ENCODE measurements at regions of chr9 and their contacts with region 1.

Region 1: DNA sequence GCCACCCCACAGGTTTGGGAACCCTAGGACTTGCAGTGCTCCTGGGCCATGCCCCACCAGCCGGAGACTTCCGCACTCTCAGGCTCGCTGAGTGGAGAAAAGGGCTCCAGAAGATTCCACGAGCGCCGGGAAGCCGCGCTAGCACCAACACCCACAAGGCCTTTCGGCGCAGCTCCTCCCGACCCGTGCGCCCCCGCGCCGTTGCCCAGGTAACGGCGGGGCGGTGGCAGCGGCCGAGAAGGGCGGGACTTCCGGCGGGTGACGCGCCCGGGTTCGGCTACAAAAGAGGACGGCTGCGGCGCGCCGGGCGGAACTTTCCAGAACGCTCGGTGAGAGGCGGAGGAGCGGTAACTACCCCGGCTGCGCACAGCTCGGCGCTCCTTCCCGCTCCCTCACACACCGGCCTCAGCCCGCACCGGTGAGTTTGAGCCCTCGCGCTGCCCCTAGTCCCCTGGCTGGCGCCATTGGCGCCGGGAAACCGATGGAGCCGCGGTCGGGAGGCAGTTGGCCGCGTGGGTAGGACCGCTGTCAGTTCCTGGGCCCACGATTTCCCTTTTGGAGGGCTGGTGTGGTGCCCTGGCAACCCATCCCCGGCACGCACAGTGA is at the start of gene DNAJA1:
- DNase-seq: peak; percentile 98
- ATAC-seq: peak; percentile 84
- H3K4me3 Mint-ChIP-seq: peak within 1 kb of the TSS; percentile 95
- H3K27ac Mint-ChIP-seq: peak within 1 kb of the TSS; percentile 88
- H3K4me1 Mint-ChIP-seq: peaks cover 63% of the 10 kb centered on the region
- H3K27me3 Mint-ChIP-seq: no peaks in the 10 kb centered on the region
- CTCF ChIP-seq: no peak
- total RNA-seq, gene DNAJA1: 107 and 117 TPM in 2 replicates

Region 2: GRCh38 chr9:32550562-32551433 is 474.3 kb before region 1 on chr9:
- CTCF ChIA-PET with region 1: no interaction called
- POLR2A ChIA-PET with region 1: interaction called, 19 read pairs
- intact Hi-C with region 1: loop called (anchors 1 kb)
- DNase-seq: peak; percentile 91
- ATAC-seq: peak; percentile 80
- H3K4me3 Mint-ChIP-seq: peak overlapping the region; percentile 95
- H3K27ac Mint-ChIP-seq: peak overlapping the region; percentile 98
- H3K4me1 Mint-ChIP-seq: peaks cover 34% of the 10 kb centered on the region
- H3K27me3 Mint-ChIP-seq: no peaks in the 10 kb centered on the region
- CTCF ChIP-seq: no peak

Region 3: GRCh38 chr9:33044127-33044673 is 19.1 kb after region 1 on chr9:
- CTCF ChIA-PET with region 1: no interaction called
- POLR2A ChIA-PET with region 1: interaction called, 39 read pairs
- intact Hi-C with region 1: loop called (anchors 1 kb)
- DNase-seq: peak; percentile 54
- ATAC-seq: peak; percentile 82
- H3K4me3 Mint-ChIP-seq: peak overlapping the region; percentile 83
- H3K27ac Mint-ChIP-seq: peak overlapping the region; percentile 50
- H3K4me1 Mint-ChIP-seq: peaks cover 16% of the 10 kb centered on the region
- H3K27me3 Mint-ChIP-seq: no peaks in the 10 kb centered on the region
- CTCF ChIP-seq: no peak

Region 4: GRCh38 chr9:33225319-33226149 is 200.5 kb after region 1 on chr9:
- CTCF ChIA-PET with region 1: no interaction called
- POLR2A ChIA-PET with region 1: interaction called, 26 read pairs
- intact Hi-C with region 1: loop called (anchors 1 kb)
- DNase-seq: no peak
- ATAC-seq: peak; percentile 33
- H3K4me3 Mint-ChIP-seq: no peak overlapping the region
- H3K27ac Mint-ChIP-seq: peak overlapping the region; percentile 4
- H3K4me1 Mint-ChIP-seq: peaks cover 51% of the 10 kb centered on the region
- H3K27me3 Mint-ChIP-seq: no peaks in the 10 kb centered on the region
- CTCF ChIP-seq: no peak

Region 5: DNA sequence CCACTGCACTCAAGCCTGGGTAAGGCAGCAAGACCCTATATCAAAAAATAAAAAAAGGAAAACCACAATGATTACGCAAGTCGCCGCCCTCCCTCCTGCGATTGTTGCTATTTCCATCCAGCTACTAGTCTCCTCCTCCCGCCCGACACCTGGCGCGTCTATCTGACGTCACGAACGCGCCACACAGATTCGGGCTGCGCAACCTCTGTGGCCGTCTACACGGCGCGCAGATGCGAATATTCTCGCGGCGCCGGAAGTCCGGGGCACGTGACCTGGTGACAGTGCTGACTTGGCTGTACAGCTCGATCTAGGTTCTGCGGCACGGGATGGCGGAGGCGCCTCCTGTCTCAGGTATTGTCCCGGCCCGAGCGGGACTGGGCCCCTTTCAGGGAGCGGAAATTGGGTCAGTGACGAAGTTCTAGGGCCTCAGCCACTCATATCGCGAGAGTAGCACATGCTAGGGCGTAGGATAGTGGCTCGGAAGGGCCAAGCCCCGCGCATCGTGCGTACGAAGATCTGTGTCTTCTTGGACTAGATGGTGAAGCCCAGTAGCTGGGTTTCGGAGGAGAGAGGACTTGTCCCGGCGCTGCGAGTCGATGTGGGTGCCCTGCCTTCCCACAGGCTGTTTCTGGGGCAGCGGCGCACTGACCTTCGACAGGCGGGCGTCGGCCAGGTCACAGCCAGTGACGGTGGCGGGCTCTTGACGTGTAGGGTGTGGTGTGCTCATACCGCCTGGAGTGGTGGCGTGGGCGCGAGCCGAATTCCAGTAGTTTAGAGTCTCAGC is 265.4 kb after region 1 on chr9 and contains the start of gene NFX1:
- CTCF ChIA-PET with region 1: no interaction called
- POLR2A ChIA-PET with region 1: interaction called, 22 read pairs
- intact Hi-C with region 1: loop called (anchors 1 kb)
- DNase-seq: peak; percentile 97
- ATAC-seq: peak; percentile 80
- H3K4me3 Mint-ChIP-seq: peak within 1 kb of the TSS; percentile 99
- H3K27ac Mint-ChIP-seq: peak within 1 kb of the TSS; percentile 100
- H3K4me1 Mint-ChIP-seq: peaks cover 62% of the 10 kb centered on the region
- H3K27me3 Mint-ChIP-seq: no peaks in the 10 kb centered on the region
- CTCF ChIP-seq: no peak
- total RNA-seq, gene NFX1: 51.0 and 57.2 TPM in 2 replicates

Region 6: GRCh38 chr9:34048923-34049697 is 1024.0 kb after region 1 on chr9:
- CTCF ChIA-PET with region 1: no interaction called
- POLR2A ChIA-PET with region 1: no interaction called
- intact Hi-C with region 1: loop called (anchors 10 kb)
- DNase-seq: peak; percentile 97
- ATAC-seq: peak; percentile 80
- H3K4me3 Mint-ChIP-seq: peak overlapping the region; percentile 99
- H3K27ac Mint-ChIP-seq: peak overlapping the region; percentile 100
- H3K4me1 Mint-ChIP-seq: peaks cover 25% of the 10 kb centered on the region
- H3K27me3 Mint-ChIP-seq: no peaks in the 10 kb centered on the region
- CTCF ChIP-seq: no peak

Measured in activated B cell treated with CpG ODN at 0.5 μM for 24 hours (primary cell).